CD4-positive, alpha-beta T cell (primary cell): ENCODE measurements at regions of chr21 and their contacts with region 1.

Region 1: DNA sequence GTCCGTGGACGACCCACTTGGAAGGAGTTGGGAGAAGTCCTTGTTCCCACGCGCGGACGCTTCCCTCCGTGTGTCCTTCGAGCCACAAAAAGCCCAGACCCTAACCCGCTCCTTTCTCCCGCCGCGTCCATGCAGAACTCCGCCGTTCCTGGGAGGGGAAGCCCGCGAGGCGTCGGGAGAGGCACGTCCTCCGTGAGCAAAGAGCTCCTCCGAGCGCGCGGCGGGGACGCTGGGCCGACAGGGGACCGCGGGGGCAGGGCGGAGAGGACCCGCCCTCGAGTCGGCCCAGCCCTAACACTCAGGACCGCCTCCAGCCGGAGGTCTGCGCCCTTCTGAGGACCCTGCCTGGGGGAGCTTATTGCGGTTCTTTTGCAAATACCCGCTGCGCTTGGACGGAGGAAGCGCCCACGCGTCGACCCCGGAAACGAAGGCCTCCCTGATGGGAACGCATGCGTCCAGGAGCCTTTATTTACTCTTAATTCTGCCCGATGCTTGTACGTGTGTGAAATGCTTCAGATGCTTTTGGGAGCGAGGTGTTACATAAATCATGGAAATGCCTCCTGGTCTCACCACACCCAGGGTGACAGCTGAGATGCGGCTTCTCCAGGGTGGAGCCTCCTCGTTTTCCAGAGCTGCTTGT is 32.4 kb downstream of the PRMT2 start:
- DNase-seq: no peak
- ATAC-seq: no peak
- H3K4me3 ChIP-seq: peak overlapping the region; percentile 55
- H3K4me3 Mint-ChIP-seq: peak overlapping the region; percentile 75
- H3K27ac ChIP-seq: no peak overlapping the region
- H3K27ac Mint-ChIP-seq: no peak overlapping the region
- H3K4me1 ChIP-seq: peaks cover 16% of the 10 kb centered on the region
- H3K4me1 Mint-ChIP-seq: peaks cover 10% of the 10 kb centered on the region
- H3K27me3 ChIP-seq: peaks cover 6 to 10% of the 10 kb centered on the region in 2 experiments
- H3K27me3 Mint-ChIP-seq: no peaks in the 10 kb centered on the region
- CTCF ChIP-seq: no peak

Region 2: GRCh38 chr21:46483300-46484295 is 184.3 kb before region 1 on chr21:
- CTCF ChIA-PET with region 1: no interaction called
- POLR2A ChIA-PET with region 1: no interaction called
- intact Hi-C with region 1: no loop called
- DNase-seq: peak in 1 of 14 experiments; percentile 54
- ATAC-seq: no peak
- H3K4me3 ChIP-seq: no peak overlapping the region
- H3K4me3 Mint-ChIP-seq: no peak overlapping the region
- H3K27ac ChIP-seq: no peak overlapping the region
- H3K27ac Mint-ChIP-seq: peak overlapping the region; percentile 43
- H3K4me1 ChIP-seq: peaks cover 8% of the 10 kb centered on the region
- H3K4me1 Mint-ChIP-seq: peaks cover 38% of the 10 kb centered on the region
- H3K27me3 ChIP-seq: no peaks in the 10 kb centered on the region
- H3K27me3 Mint-ChIP-seq: no peaks in the 10 kb centered on the region
- CTCF ChIP-seq: no peak

Region 3: GRCh38 chr21:46540087-46540710 is 127.7 kb before region 1 on chr21:
- CTCF ChIA-PET with region 1: no interaction called
- POLR2A ChIA-PET with region 1: no interaction called
- intact Hi-C with region 1: no loop called
- DNase-seq: peak in 2 of 14 experiments; percentile 48 to 77
- ATAC-seq: peak; percentile 65
- H3K4me3 ChIP-seq: no peak overlapping the region
- H3K4me3 Mint-ChIP-seq: peak overlapping the region; percentile 49
- H3K27ac ChIP-seq: peak overlapping the region in 1 of 2 donors; percentile 37
- H3K27ac Mint-ChIP-seq: peak overlapping the region; percentile 82
- H3K4me1 ChIP-seq: peaks cover 14% of the 10 kb centered on the region
- H3K4me1 Mint-ChIP-seq: peaks cover 54% of the 10 kb centered on the region
- H3K27me3 ChIP-seq: no peaks in the 10 kb centered on the region
- H3K27me3 Mint-ChIP-seq: no peaks in the 10 kb centered on the region
- CTCF ChIP-seq: no peak

Region 4: GRCh38 chr21:46646541-46647154 is 21.2 kb before region 1 on chr21:
- CTCF ChIA-PET with region 1: no interaction called
- POLR2A ChIA-PET with region 1: interaction called, 10 read pairs
- intact Hi-C with region 1: no loop called
- DNase-seq: no peak
- ATAC-seq: no peak
- H3K4me3 ChIP-seq: no peak overlapping the region
- H3K4me3 Mint-ChIP-seq: peak overlapping the region; percentile 38
- H3K27ac ChIP-seq: no peak overlapping the region
- H3K27ac Mint-ChIP-seq: peak overlapping the region; percentile 66
- H3K4me1 ChIP-seq: peaks cover 31% of the 10 kb centered on the region
- H3K4me1 Mint-ChIP-seq: peaks cover 53% of the 10 kb centered on the region
- H3K27me3 ChIP-seq: no peaks in the 10 kb centered on the region
- H3K27me3 Mint-ChIP-seq: no peaks in the 10 kb centered on the region
- CTCF ChIP-seq: no peak